ENCODE measurements at regions of chr1 and their contacts with region 1.

Region 1: DNA sequence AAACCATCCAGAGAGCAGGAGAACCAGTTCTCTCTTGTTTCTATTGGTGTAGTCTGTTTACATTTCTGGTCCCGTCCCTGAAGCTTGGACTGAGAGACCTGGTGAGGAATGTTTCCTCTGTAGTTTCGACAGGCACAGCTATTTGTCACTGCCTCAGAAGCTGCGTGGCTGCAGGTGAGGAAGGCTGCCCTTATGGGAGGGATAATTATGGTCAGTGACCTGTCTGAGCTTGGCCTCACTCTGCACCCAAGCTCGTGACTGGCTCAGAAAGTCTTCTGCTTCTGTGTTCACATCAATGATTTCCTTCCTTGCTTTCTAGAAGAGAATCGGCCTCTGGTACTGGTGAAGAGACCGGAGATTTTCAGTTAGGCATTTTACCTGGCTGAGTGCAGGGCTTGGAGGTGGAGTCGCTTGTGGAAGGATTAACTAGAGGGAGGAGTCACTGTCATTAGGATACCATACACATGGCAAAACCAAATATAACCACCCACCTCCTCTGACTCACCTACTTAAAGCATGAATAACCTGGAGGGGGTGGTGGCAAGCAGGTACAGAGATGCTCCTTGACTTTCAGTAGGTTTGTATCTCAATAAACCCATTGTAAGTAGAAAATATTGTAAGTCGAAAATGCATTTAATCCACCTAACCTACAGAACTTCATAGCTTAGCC is 19.9 kb upstream of the WDR26 start:
- DNase-seq: no peak
- H3K4me3 ChIP-seq: no peak overlapping the region
- H3K27ac ChIP-seq: peak overlapping the region; percentile 48 to 58 (median 54)
- H3K4me1 ChIP-seq: peaks cover 0 to 41% (median 29%) of the 10 kb centered on the region in 4 donors
- H3K27me3 ChIP-seq: no peaks in the 10 kb centered on the region
- CTCF ChIP-seq: no peak
- EP300 ChIP-seq: no peak
- POLR2A ChIP-seq: no peak

Region 2: DNA sequence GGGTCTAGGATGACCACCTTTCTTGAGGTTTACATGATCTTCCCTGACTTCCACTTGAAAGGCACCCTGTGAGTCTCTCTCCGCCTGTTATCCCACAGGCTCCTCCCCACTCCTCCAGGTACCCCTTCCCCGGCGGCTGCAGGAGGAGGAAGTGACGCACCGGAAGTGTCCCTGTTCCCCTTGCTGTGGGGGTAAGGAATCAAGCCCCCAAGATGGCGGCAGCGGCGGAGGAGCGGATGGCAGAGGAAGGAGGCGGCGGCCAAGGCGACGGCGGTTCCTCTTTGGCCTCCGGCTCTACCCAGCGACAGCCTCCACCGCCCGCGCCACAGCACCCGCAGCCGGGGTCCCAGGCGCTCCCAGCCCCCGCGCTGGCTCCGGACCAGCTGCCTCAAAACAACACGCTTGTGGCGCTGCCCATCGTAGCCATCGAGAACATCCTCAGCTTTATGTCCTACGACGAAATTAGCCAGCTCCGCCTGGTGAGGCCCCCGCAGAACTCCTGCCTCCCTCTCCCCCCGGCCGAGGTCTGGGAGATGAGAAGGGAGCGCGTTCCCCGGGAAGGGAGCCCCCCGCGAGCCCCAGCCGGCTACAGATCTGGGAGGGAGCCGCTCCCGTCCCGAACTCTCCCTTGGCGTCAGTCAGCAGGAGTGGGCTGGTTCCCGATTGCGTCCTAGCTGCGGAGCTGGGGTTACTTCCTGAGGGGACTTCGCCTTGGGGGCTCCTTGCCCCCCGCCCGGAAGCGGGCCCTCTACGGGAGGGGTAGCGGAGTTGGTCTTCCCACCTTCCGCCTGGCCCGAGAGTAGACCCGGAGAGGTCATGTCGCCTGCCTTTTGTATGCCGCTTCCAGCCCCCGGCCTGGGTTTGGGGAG is 340.4 kb before region 1 on chr1 and contains the start of gene FBXO28:
- intact Hi-C with region 1: loop called (anchors 1 kb)
- DNase-seq: peak; percentile 98
- H3K4me3 ChIP-seq: peak within 1 kb of the TSS; percentile 71 to 98 (median 84)
- H3K27ac ChIP-seq: peak within 1 kb of the TSS; percentile 90 to 95 (median 92)
- H3K4me1 ChIP-seq: peaks cover 0 to 33% (median 29%) of the 10 kb centered on the region in 4 donors
- H3K27me3 ChIP-seq: peaks cover 0 to 9% (median 0%) of the 10 kb centered on the region in 3 donors
- CTCF ChIP-seq: no peak
- EP300 ChIP-seq: no peak
- POLR2A ChIP-seq: peak; percentile 89 to 90
- total RNA-seq, gene FBXO28: 21.9 to 32.7 (median 26.2) TPM

Region 3: GRCh38 chr1:224182866-224183590 is 271.5 kb before region 1 on chr1 and contains the start of gene DEGS1:
- intact Hi-C with region 1: loop called (anchors 10 kb)
- DNase-seq: peak; percentile 94
- H3K4me3 ChIP-seq: peak within 1 kb of the TSS; percentile 77 to 99 (median 88)
- H3K27ac ChIP-seq: peak within 1 kb of the TSS; percentile 95 to 99 (median 97)
- H3K4me1 ChIP-seq: peaks cover 0 to 47% (median 39%) of the 10 kb centered on the region in 4 donors
- H3K27me3 ChIP-seq: no peaks in the 10 kb centered on the region
- CTCF ChIP-seq: no peak
- EP300 ChIP-seq: no peak
- POLR2A ChIP-seq: peak; percentile 65 to 70
- total RNA-seq, gene DEGS1: 84.6 to 111 (median 105) TPM

Region 4: DNA sequence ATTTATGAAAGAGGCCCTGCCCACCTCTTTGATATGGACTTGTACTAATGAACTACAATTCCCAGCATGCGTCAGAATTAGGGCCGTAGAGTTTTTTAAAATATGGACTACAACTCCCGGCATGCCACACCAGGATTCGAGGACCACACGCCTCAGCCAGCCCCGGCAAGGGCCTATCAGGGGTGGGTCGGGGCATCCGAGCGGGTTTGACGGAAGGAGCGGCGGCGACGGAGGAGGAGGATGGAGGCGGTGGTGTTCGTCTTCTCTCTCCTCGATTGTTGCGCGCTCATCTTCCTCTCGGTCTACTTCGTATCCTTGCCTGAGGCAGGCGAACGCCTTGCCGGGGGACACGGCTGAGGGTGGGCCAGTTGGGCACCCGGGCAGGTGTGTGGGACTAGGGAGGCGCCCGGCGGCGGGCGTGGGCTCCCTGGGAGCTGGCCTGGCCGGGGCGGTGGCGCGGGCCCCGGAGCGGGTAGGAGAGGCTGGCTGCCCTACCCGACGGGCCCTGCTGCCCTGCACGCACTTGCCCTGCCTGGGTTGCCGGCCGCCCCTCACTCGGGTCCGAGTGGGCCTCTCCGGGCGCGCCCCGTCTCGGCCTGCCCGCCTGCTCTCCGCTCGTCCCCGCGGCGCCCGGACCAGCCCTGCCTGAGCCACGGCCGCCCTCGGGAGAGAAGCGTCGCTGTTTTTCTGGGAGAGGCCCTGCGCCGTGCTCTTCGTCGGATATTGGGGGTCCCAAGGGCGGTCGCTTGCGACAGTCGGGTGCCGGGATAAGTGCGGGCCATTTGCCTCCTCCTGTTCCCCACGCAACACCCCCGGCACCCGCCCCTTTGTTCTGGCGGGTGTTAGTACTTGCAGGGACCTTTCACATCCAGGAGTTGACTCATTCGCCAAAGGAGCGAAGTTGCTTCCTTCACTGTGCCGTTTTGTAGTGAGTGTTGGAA is 97.6 kb before region 1 on chr1 and contains the start of gene CNIH4:
- intact Hi-C with region 1: loop called (anchors 5 kb)
- DNase-seq: peak; percentile 96
- H3K4me3 ChIP-seq: peak within 1 kb of the TSS; percentile 75 to 100 (median 90)
- H3K27ac ChIP-seq: peak within 1 kb of the TSS; percentile 90 to 97 (median 95)
- H3K4me1 ChIP-seq: peaks cover 0 to 29% (median 25%) of the 10 kb centered on the region in 4 donors
- H3K27me3 ChIP-seq: no peaks in the 10 kb centered on the region
- CTCF ChIP-seq: no peak
- EP300 ChIP-seq: no peak
- POLR2A ChIP-seq: peak; percentile 86 to 93
- total RNA-seq, gene CNIH4: 26.0 to 42.8 (median 28.7) TPM

Region 5: GRCh38 chr1:224434691-224435317 is 19.7 kb before region 1 on chr1 and contains the start of gene WDR26:
- intact Hi-C with region 1: loop called (anchors 2 kb)
- DNase-seq: peak; percentile 90
- H3K4me3 ChIP-seq: peak within 1 kb of the TSS; percentile 76 to 92 (median 90)
- H3K27ac ChIP-seq: peak within 1 kb of the TSS; percentile 89 to 99 (median 98)
- H3K4me1 ChIP-seq: peaks cover 0 to 47% (median 39%) of the 10 kb centered on the region in 4 donors
- H3K27me3 ChIP-seq: no peaks in the 10 kb centered on the region
- CTCF ChIP-seq: no peak
- EP300 ChIP-seq: no peak
- POLR2A ChIP-seq: peak; percentile 24 to 50
- total RNA-seq, gene WDR26: 63.3 to 105 (median 66.6) TPM